IMR-90 (cell line): ENCODE measurements at regions of chr15 and their contacts with region 1.

Region 1: DNA sequence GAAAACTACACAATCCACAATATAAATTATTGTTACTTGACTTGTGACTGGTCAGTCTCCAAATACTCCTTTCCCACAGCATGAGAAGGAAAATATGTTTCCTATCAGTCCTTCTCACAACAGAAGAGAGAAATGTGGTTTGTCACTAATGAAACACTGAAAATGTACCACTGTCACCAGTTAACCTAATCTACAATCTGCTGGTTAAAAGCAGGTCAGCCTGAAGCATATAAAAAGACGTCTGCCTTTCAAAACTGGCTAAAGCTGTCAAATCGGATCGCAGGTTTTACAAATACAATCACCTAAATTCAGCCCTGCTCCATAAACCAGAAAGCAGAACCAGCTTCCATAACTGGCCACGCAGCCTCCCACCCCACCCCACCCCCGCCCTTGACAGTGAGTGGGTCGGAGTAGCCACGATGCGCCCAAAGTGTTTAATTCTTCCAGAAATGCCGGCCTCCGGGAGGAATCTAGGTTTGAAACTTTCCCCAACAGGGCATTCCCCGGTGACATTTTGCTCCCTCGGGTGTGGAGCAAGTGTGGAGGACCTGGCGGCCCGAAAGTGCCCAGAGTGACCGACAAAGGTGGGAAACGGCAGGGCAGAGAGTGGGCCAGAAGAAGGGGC is 682 bp downstream of the ETFA start:
- DNase-seq: no peak
- ATAC-seq: peak; percentile 19
- H3K4me3 ChIP-seq: peak overlapping the region; percentile 82
- H3K27ac ChIP-seq: peak overlapping the region; percentile 79
- H3K4me1 ChIP-seq: peaks cover 10% of the 10 kb centered on the region
- H3K27me3 ChIP-seq: no peaks in the 10 kb centered on the region
- CTCF ChIP-seq: no peak
- POLR2A ChIP-seq: no peak
- RAD21 ChIP-seq: no peak

Region 2: GRCh38 chr15:76293361-76293760 is 17.2 kb before region 1 on chr15:
- CTCF ChIA-PET with region 1: no interaction called
- POLR2A ChIA-PET with region 1: interaction called, 13 read pairs
- dilution Hi-C with region 1: no loop called
- in situ Hi-C with region 1: no loop called
- intact Hi-C with region 1: no loop called
- DNase-seq: peak; percentile 39
- ATAC-seq: no peak
- H3K4me3 ChIP-seq: no peak overlapping the region
- H3K27ac ChIP-seq: no peak overlapping the region
- H3K4me1 ChIP-seq: peaks cover 3% of the 10 kb centered on the region; the same call in 1 of the 2 replicates
- H3K27me3 ChIP-seq: no peaks in the 10 kb centered on the region
- CTCF ChIP-seq: no peak
- POLR2A ChIP-seq: no peak
- RAD21 ChIP-seq: no peak